ENCODE measurements at regions of chr17 and their contacts with region 1.

Region 1: DNA sequence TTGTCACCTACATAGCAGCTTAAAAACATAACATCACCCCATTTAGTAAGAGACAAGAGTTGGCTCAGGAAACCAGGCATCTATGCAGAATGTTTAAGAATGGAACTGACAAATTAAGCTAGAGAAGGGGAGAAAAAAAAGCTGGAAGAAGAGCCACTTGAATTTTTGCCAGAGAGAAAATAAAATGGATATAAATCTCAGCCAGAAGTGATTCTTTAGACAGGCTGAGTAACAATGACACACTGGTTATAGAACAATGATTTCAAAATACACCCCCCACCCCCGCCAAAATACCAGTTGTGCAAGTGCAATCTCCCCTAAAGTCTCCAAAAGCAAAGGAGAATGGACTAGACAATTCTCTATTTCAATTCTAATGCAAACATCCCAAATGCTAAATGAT is 22.4 kb downstream of the LSM12 start:
- DNase-seq: no peak
- H3K4me3 ChIP-seq: no peak overlapping the region
- H3K27ac ChIP-seq: no peak overlapping the region
- H3K4me1 ChIP-seq: no peaks in the 10 kb centered on the region
- H3K27me3 ChIP-seq: no peaks in the 10 kb centered on the region
- CTCF ChIP-seq: no peak
- EP300 ChIP-seq: no peak
- POLR2A ChIP-seq: no peak
- RAD21 ChIP-seq: no peak

Region 2: GRCh38 chr17:44024271-44024663 is 19.8 kb before region 1 on chr17:
- CTCF ChIA-PET with region 1: interaction called, 108 read pairs
- POLR2A ChIA-PET with region 1: interaction called, 55 read pairs
- DNase-seq: no peak
- H3K4me3 ChIP-seq: no peak overlapping the region
- H3K27ac ChIP-seq: no peak overlapping the region
- H3K4me1 ChIP-seq: no peaks in the 10 kb centered on the region
- H3K27me3 ChIP-seq: no peaks in the 10 kb centered on the region
- CTCF ChIP-seq: no peak
- EP300 ChIP-seq: no peak
- POLR2A ChIP-seq: no peak
- RAD21 ChIP-seq: no peak